ENCODE measurements at regions of chr17 and their contacts with region 1.

Region 1: DNA sequence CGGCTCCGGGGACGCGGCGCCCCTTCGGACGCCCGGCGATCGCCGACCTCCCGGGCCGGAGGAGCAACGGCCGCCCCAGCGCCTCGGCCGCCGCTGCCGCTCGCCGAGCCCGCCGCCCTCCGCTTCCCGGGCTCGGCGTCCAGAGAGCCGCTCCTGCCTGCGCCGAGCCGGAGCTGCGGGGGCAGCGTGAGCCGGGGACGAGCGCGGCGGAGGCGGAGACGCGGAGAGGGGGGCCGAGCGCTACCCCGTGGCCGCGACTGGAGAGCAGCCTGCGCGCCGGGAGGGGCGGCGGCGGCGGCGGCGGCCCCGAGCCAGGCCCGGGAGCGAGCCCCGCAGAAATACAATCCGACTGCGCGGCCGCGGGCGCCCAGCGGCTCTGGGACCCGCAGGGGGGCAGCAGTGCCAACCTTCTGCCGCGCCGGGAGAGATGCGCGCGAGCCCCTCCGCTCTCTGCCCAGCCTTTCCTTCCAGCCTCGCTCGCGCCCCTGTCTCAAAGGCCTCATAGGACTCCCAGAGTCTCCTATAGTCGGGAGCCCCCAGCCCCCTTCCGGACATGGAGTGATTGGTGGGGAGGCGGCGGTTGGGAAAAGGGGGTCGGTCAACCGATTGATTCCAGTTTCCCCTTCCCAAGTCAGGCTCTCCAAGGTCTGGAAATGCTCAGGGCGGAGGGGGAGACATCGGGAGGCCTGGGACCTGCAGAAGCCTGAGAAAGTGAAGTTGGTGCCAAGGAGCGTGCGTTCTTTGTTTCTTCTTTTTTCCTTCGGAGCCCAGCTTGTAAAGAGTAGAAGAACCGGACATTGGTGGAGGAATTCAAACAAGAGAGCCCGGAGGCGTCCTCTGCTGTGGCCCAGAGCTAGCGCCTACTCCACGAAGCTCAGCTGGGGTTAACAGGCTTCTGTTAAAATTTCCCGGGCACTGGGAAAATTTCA is 1.1 kb upstream of the SDK2 start:
- DNase-seq: peak in 7 of 9 donors; percentile 45 to 58 (median 49)
- ATAC-seq: peak; percentile 72
- H3K4me3 ChIP-seq: no peak overlapping the region
- H3K4me3 Mint-ChIP-seq: peak overlapping the region; percentile 45 to 95 (median 72)
- H3K27ac ChIP-seq: no peak overlapping the region
- H3K27ac Mint-ChIP-seq: no peak overlapping the region
- H3K4me1 ChIP-seq: peaks cover 0 to 13% of the 10 kb centered on the region in 2 donors
- H3K4me1 Mint-ChIP-seq: peaks cover 19 to 38% (median 25%) of the 10 kb centered on the region in 7 donors
- H3K27me3 ChIP-seq: no peaks in the 10 kb centered on the region
- H3K27me3 Mint-ChIP-seq: peaks cover 0 to 75% (median 5%) of the 10 kb centered on the region in 5 donors

Region 2: DNA sequence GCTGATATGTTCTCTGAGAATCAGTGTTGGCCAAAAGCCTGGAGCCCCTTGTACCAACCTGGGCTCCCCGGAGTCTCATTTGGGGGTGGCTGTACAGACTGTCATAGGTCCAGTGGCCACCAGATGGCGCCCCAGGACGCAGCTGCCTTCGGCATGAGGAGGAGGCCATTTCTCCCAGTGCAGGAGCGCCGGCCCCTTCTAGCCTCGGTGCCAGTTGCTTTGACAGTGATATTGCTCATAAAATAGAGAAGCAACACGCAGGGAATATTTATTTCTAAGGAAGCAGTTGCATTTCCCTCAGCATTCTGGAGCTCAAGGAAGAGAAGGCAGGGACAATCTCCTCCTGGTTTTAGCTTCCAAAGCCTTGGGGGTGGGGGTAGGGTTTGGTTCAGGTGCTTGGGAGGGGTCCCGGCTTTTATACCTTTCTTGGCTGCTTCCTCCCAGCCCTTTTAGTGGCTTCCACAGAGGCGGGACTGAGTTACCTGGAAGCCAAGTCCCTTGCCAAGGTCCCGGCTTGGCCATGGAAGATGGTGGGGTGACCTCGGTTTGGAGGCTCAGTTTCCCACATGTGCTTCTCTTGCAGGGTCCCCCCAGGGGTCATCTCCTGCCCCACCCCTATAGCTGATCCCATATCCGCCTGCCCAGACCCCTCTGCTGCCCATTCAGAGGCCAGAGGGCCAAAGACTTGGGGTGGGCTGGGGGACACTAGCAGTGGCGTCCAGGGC is 215.7 kb before region 1 on chr17:
- CTCF ChIA-PET with region 1: interaction called, 23 read pairs
- POLR2A ChIA-PET with region 1: no interaction called
- intact Hi-C with region 1: loop called (anchors 1 kb)
- DNase-seq: peak; percentile 68 to 90 (median 82)
- ATAC-seq: peak; percentile 96
- H3K4me3 ChIP-seq: no peak overlapping the region
- H3K4me3 Mint-ChIP-seq: peak overlapping the region in 7 of 10 donors; percentile 27 to 64 (median 37)
- H3K27ac ChIP-seq: no peak overlapping the region
- H3K27ac Mint-ChIP-seq: peak overlapping the region in 3 of 9 donors; percentile 1 to 55 (median 17)
- H3K4me1 ChIP-seq: no peaks in the 10 kb centered on the region
- H3K4me1 Mint-ChIP-seq: peaks cover 0 to 17% (median 15%) of the 10 kb centered on the region in 7 donors
- H3K27me3 ChIP-seq: no peaks in the 10 kb centered on the region
- H3K27me3 Mint-ChIP-seq: peaks cover 0 to 2% (median 0%) of the 10 kb centered on the region in 5 donors

Region 3: DNA sequence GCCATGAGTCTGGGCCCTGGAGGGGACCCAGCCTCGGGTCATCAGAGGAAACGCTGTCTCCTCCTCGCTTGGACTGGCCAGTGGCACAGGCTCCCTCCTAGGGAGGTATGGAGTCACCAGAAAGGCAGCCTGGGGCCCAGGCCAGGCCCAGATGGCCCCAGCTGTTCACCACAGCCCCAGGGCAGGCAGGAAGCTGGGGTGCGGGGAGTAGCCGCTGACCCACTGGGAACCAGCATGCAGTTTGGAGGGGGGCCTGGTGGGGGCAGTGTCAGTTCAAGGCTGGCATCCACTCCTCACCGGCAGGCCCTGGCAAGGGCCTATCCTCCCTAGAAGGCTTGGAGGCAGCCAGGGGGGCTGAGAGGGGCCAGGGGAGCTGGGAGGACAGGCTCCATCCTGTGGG is 49.8 kb before region 1 on chr17:
- CTCF ChIA-PET with region 1: no interaction called
- POLR2A ChIA-PET with region 1: interaction called, 3 read pairs
- intact Hi-C with region 1: loop called (anchors 1 kb)
- DNase-seq: peak in 5 of 9 donors; percentile 17 to 34 (median 28)
- ATAC-seq: no peak
- H3K4me3 ChIP-seq: no peak overlapping the region
- H3K4me3 Mint-ChIP-seq: peak overlapping the region in 1 of 10 donors; percentile 85
- H3K27ac ChIP-seq: peak overlapping the region; percentile 20
- H3K27ac Mint-ChIP-seq: peak overlapping the region in 7 of 9 donors; percentile 45 to 97 (median 93)
- H3K4me1 ChIP-seq: peaks cover 37 to 59% of the 10 kb centered on the region in 2 donors
- H3K4me1 Mint-ChIP-seq: peaks cover 33 to 74% (median 65%) of the 10 kb centered on the region in 7 donors
- H3K27me3 ChIP-seq: no peaks in the 10 kb centered on the region
- H3K27me3 Mint-ChIP-seq: no peaks in the 10 kb centered on the region

Region 4: DNA sequence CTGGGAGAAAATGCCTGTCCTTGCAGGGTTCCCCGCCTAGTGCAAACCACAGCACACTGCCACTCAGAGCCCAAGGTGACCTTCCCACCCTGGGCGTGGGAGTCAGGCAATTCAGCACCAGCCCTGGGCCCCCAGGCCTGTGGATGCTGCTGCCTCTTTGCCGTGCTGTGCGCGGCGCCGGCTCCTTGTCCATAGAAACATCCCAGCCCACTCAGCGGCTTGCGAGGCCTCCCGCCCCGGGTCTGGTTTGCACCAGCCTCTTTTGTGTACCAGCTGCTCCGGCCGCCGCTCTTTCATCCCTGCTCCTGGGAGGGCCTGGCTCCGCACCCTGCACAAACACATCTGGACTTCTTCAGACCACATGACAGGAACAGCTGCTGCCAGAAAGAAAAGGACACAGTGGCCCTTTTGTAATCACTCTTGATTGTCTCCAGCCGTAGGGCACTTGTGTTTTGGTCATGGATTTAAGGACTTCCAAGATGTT is 74.3 kb after region 1 on chr17:
- CTCF ChIA-PET with region 1: interaction called, 6 read pairs
- POLR2A ChIA-PET with region 1: interaction called, 5 read pairs
- intact Hi-C with region 1: loop called in 1 of 2 experiments (anchors 5 kb)
- DNase-seq: no peak
- ATAC-seq: no peak
- H3K4me3 ChIP-seq: no peak overlapping the region
- H3K4me3 Mint-ChIP-seq: peak overlapping the region in 4 of 10 donors; percentile 30 to 69 (median 59)
- H3K27ac ChIP-seq: no peak overlapping the region
- H3K27ac Mint-ChIP-seq: peak overlapping the region in 7 of 9 donors; percentile 48 to 98 (median 82)
- H3K4me1 ChIP-seq: peaks cover 18 to 45% of the 10 kb centered on the region in 2 donors
- H3K4me1 Mint-ChIP-seq: peaks cover 20 to 66% (median 57%) of the 10 kb centered on the region in 7 donors
- H3K27me3 ChIP-seq: no peaks in the 10 kb centered on the region
- H3K27me3 Mint-ChIP-seq: peaks cover 0 to 7% (median 0%) of the 10 kb centered on the region in 5 donors

Region 5: DNA sequence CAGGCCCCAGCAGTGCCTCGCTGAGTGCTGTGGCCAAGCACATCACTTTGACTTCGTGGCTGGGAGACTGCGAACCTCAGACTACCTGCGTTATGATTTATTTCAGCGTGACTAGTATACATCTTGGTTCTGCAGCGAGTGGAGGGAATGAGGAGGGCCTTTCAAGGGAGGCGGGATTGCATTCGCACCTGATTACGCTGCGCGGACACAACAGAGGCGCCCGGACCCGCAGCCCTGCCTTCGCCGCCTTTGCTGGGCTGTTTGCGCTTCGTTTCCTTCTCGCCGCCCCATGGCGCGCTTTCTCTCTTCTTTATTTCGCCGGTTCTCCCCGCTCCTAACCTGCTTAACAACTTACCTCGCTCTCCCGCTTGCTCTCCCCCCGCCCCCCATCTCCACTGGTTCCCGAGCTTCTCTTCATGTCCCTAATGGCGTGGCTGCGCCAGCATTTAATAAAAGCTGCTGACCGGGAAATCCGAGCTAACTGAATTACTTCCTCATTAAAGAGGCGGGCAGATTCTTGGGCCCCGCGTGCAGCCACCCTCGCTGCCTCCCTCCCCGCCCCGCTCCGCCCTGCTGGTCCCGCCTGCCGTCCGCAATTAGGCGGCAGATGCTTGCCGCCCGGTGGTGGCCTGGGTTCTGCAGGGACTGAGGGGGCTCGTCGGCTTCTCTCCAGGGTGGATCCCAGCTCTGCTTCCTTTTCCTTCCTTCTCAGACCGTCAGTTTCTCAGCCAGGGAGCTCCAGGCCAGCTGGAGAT is 256.5 kb after region 1 on chr17:
- CTCF ChIA-PET with region 1: no interaction called
- POLR2A ChIA-PET with region 1: no interaction called
- intact Hi-C with region 1: loop called in 1 of 2 experiments (anchors 1 kb)
- DNase-seq: peak in 5 of 9 donors; percentile 5 to 21 (median 13)
- ATAC-seq: peak; percentile 73
- H3K4me3 ChIP-seq: peak overlapping the region; percentile 48
- H3K4me3 Mint-ChIP-seq: peak overlapping the region; percentile 81 to 95 (median 90)
- H3K27ac ChIP-seq: no peak overlapping the region
- H3K27ac Mint-ChIP-seq: peak overlapping the region in 3 of 9 donors; percentile 28 to 72 (median 28)
- H3K4me1 ChIP-seq: peaks cover 0 to 6% of the 10 kb centered on the region in 2 donors
- H3K4me1 Mint-ChIP-seq: peaks cover 2 to 21% (median 12%) of the 10 kb centered on the region in 7 donors
- H3K27me3 ChIP-seq: peaks cover 0 to 3% of the 10 kb centered on the region in 2 donors
- H3K27me3 Mint-ChIP-seq: peaks cover 18 to 38% (median 27%) of the 10 kb centered on the region in 5 donors

Region 6: DNA sequence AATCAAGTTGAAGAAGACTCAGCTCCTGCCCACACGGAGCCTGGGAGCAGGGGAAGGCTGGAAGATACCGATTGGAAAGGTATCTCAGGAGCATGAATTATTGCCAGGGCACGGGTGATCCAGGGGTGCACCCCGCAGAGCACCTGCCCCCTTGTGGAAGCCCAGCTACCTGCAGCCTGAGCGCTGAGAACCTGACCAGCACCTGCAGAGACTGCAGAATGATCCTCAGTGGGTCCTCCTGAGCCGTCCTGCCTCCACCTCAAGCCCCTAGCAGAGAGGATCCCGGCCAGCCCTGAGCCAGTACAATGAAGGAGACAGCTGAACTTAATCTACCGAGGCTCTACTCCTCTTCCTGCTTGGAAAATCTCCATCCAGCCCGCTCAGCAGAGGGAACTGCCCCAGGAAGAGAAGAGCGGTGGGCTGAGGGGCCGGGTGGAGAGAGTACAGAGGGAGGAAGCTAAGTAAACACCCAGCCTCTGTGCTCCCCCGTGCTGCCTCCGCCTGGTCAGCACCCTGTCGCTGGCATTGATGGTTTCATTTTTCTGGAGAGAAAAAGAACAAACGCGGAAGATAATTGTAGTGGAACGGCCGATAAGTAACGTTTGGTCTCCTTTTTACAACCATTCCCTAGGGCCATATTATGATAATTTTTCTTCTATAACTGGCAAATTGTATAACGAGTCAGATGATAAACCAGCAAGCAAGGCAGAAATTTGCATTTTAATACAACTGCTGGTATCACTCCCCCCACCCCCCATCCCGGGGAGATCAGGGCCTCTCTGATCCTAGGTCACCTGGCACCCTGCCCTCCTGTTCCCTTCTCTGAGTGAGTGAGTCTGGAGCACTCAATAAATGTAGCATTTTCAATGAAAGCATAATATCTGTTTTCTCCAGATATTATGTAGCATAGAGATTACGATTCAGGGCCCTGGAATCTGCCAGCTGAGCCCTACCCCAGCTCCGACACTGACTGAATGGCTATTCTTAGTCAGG is 353.6 kb after region 1 on chr17:
- CTCF ChIA-PET with region 1: interaction called, 7 read pairs
- POLR2A ChIA-PET with region 1: no interaction called
- intact Hi-C with region 1: loop called (anchors 1 to 5 kb)
- DNase-seq: peak; percentile 24 to 70 (median 54)
- ATAC-seq: peak; percentile 84
- H3K4me3 ChIP-seq: no peak overlapping the region
- H3K4me3 Mint-ChIP-seq: no peak overlapping the region
- H3K27ac ChIP-seq: no peak overlapping the region
- H3K27ac Mint-ChIP-seq: no peak overlapping the region
- H3K4me1 ChIP-seq: no peaks in the 10 kb centered on the region
- H3K4me1 Mint-ChIP-seq: peaks cover 0 to 8% (median 0%) of the 10 kb centered on the region in 7 donors
- H3K27me3 ChIP-seq: no peaks in the 10 kb centered on the region
- H3K27me3 Mint-ChIP-seq: peaks cover under 1 to 24% (median 14%) of the 10 kb centered on the region in 5 donors